ENCODE measurements at regions of chr1 and their contacts with region 1.

Region 1: DNA sequence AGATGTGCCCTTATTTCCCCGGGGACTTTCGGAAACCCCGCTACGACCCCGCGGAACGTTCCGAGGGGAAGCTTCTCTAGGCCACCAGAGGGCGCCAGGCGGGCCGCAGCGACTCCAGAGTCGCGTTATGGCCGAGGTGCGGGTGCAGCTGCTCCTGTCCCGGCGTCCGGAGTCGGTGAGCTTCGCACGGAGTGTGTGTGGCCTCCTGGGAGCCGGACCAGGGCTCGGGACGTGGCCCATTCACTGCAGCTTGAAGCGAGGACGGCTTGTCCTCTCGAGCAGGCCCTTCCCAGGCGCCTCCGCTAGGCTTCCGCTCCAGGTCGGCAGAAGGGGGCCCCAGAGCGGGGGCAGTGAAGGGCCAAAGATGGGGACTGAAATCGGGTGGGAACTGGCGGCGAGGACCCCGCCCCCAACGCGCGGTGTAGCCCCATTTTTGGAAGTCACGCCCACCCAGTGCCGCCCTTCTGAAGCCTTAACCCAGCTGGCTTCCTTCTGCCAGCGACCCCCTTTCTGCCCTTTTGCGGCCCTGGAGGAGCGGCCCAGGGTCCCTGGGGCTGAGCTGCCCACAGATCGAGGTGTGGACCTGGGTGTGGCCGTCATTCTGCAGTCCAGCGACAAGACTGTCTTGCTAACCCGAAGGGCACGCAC is at the start of gene NUDT17:
- DNase-seq: peak; percentile 71
- H3K4me3 ChIP-seq: peak within 1 kb of the TSS; percentile 37 to 59 (median 58)
- H3K27ac ChIP-seq: peak within 1 kb of the TSS; percentile 28
- H3K4me1 ChIP-seq: peaks cover 24% of the 10 kb centered on the region
- H3K27me3 ChIP-seq: no peaks in the 10 kb centered on the region
- CTCF ChIP-seq: peak; percentile 96 to 97
- POLR2A ChIP-seq: peak; percentile 75
- total RNA-seq, gene NUDT17: 3.6 and 5.1 TPM in 2 replicates

Region 2: DNA sequence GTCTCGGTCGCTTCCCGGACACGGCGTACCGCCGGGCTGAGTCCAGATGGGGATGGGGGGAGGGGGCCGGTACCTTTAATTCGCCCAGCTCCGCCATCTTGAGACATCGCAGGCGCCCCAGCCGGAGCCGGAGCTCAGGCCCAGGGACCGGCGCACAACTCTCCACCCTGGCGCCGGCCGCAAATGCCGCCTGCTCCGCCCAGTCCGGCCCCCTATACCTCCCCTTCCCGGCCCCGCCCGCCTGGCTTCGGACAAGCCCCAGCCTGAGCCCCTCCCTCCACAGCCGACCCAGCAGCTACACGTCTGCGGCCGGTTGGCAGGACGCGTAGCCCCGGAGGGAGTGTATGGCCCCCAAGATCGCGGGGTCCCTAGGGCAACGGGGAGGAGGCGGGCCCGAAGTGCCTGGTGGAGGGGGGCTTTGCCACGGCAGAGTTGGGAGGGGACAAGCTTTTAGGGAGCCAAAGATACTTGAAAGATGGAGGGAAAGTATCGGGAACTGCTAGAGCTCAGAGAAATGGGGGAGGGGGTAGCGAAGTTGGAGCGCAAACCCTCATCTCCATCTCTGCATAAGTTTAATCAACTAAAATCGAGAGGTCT is 13.4 kb after region 1 on chr1 and contains the start of gene PIAS3:
- CTCF ChIA-PET with region 1: interaction called, 154 read pairs
- POLR2A ChIA-PET with region 1: interaction called, 13 read pairs
- dilution Hi-C with region 1: no loop called
- intact Hi-C with region 1: loop called (anchors 1 kb)
- DNase-seq: peak; percentile 97
- H3K4me3 ChIP-seq: peak within 1 kb of the TSS; percentile 64 to 78 (median 71)
- H3K27ac ChIP-seq: peak within 1 kb of the TSS; percentile 43
- H3K4me1 ChIP-seq: peaks cover 7% of the 10 kb centered on the region
- H3K27me3 ChIP-seq: peaks cover 2 to 4% of the 10 kb centered on the region in 2 experiments
- CTCF ChIP-seq: no peak
- POLR2A ChIP-seq: no peak
- total RNA-seq, gene PIAS3: 50.1 and 53.3 TPM in 2 replicates

Region 3: DNA sequence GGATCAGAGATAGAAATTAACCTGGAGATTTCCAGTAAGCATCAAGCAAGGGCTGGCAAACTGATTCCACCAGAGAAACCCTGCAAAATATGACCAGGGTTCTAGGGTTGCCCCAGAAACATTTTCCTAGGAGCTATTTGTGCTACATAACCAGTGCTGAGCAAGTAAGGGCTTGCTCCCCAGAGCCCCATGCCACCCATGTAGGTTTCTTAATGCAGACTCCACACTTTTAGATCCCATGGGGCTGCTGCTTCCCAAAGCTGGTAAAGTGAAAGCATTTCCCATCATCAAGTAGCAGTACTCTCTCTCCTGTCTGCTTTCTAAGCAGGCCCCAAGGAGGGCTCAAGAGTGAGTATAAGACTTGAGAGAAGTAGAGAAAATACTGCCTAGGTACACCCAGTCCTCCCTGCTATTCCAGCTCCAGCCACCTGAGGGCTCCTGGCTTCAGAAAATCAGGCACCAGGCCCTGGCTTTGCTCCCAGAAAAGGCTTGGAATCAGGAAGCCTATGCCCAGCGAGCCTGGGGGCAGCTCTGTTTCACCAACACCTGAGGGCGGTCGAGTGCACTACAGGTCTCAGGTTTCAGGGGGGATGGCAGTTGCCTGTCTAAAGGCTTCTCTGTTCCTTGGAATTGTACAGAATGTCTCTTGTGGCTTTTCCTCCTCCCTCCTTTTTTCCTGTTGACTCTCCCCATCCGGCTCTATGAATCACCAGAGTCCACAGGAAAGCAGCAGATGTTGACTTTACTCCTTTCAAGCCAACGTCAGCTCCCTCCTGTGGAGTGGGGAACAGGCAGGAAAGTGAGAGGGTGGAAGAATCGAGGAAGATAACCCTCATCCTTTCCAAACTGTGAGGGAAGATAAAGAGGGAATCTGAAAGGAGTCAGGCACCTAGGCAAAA is 46.2 kb after region 1 on chr1:
- CTCF ChIA-PET with region 1: interaction called, 152 read pairs
- POLR2A ChIA-PET with region 1: no interaction called
- dilution Hi-C with region 1: no loop called
- intact Hi-C with region 1: loop called (anchors 2 kb)
- DNase-seq: peak; percentile 99
- H3K4me3 ChIP-seq: peak overlapping the region in 1 of 3 experiments; percentile 6
- H3K27ac ChIP-seq: peak overlapping the region; percentile 95
- H3K4me1 ChIP-seq: peaks cover 31% of the 10 kb centered on the region
- H3K27me3 ChIP-seq: no peaks in the 10 kb centered on the region
- CTCF ChIP-seq: peak; percentile 91 to 99
- POLR2A ChIP-seq: peak; percentile 71

Region 4: DNA sequence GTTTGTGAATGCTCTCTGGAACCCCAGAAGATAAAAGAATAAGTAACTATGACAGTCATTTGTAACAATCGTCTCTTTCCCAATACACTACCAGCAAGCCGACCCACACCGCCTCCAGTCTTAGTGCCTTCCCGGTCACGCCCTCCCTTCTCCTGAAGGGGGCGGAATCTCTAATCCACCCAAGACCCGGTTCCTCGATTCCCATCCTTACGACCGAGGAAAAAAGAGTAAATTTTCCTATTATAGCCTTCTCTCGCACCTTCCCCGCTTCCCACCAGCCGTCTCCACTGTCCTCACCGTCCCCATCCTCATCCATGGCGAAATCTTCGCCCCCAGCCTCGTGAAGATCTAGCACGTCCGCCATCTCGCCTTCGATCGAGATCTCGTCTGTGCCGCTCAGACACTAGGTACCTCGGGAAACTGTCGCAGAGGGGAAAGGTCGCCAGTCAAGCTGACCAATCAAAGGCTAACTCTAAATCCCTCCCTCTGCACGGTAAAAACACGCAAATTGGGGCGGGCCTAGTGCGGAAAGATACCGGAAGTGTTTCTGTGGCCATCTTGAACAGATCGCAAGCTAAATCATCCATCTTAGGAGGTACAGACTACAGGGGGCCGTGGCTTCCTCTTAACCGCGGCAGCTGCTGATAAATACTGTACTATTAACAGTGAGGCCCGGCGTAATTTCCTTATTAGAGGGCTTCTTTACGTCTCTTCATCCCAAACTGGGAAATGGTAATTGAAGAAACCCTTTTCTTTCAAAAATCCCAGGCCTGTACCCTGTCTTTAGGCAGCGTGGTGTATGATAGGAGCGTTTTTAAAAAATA is 81.6 kb after region 1 on chr1 and contains the start of gene RBM8A:
- CTCF ChIA-PET with region 1: interaction called, 13 read pairs
- POLR2A ChIA-PET with region 1: interaction called, 4 read pairs
- dilution Hi-C with region 1: no loop called
- intact Hi-C with region 1: no loop called
- DNase-seq: peak; percentile 99
- H3K4me3 ChIP-seq: peak within 1 kb of the TSS; percentile 80 to 89 (median 80)
- H3K27ac ChIP-seq: peak within 1 kb of the TSS; percentile 94
- H3K4me1 ChIP-seq: peaks cover 8% of the 10 kb centered on the region
- H3K27me3 ChIP-seq: no peaks in the 10 kb centered on the region
- CTCF ChIP-seq: peak; percentile 64 to 70
- POLR2A ChIP-seq: peak; percentile 88
- total RNA-seq, gene RBM8A: 194 and 200 TPM in 2 replicates

Region 5: GRCh38 chr1:145944532-145944931 is 98.9 kb after region 1 on chr1:
- CTCF ChIA-PET with region 1: no interaction called
- POLR2A ChIA-PET with region 1: no interaction called
- dilution Hi-C with region 1: no loop called
- intact Hi-C with region 1: no loop called
- DNase-seq: no peak
- H3K4me3 ChIP-seq: no peak overlapping the region
- H3K27ac ChIP-seq: no peak overlapping the region
- H3K4me1 ChIP-seq: no peaks in the 10 kb centered on the region
- H3K27me3 ChIP-seq: no peaks in the 10 kb centered on the region
- CTCF ChIP-seq: no peak
- POLR2A ChIP-seq: no peak

Region 6: GRCh38 chr1:146012737-146013403 is 167.2 kb after region 1 on chr1:
- CTCF ChIA-PET with region 1: interaction called, 43 read pairs
- POLR2A ChIA-PET with region 1: interaction called, 7 read pairs
- dilution Hi-C with region 1: no loop called
- intact Hi-C with region 1: loop called (anchors 1 kb)
- DNase-seq: peak; percentile 84
- H3K4me3 ChIP-seq: no peak overlapping the region
- H3K27ac ChIP-seq: no peak overlapping the region
- H3K4me1 ChIP-seq: peaks cover 4% of the 10 kb centered on the region
- H3K27me3 ChIP-seq: peaks cover 6 to 9% of the 10 kb centered on the region in 2 experiments
- CTCF ChIP-seq: peak; percentile 52 to 60
- POLR2A ChIP-seq: no peak

Measured in endothelial cell of umbilical vein (primary cell).